Activated CD4-positive, alpha-beta T cell treated with anti-CD3 and anti-CD28 coated beads for 36 hours (primary cell): ENCODE measurements at regions of chr12 and their contacts with region 1.

Region 1: GRCh38 chr12:47882781-47883546 is 21.8 kb downstream of the VDR start:
- DNase-seq: peak; percentile 70
- ATAC-seq: peak; percentile 14
- H3K4me3 Mint-ChIP-seq: peak overlapping the region; percentile 78
- H3K27ac Mint-ChIP-seq: peak overlapping the region; percentile 97
- H3K4me1 Mint-ChIP-seq: peaks cover 81% of the 10 kb centered on the region
- H3K27me3 Mint-ChIP-seq: no peaks in the 10 kb centered on the region

Region 2: GRCh38 chr12:46473634-46474329 is 1409.2 kb before region 1 on chr12:
- CTCF ChIA-PET with region 1: no interaction called
- POLR2A ChIA-PET with region 1: no interaction called
- intact Hi-C with region 1: no loop called
- DNase-seq: no peak
- ATAC-seq: no peak
- H3K4me3 Mint-ChIP-seq: no peak overlapping the region
- H3K27ac Mint-ChIP-seq: peak overlapping the region; percentile 69
- H3K4me1 Mint-ChIP-seq: peaks cover 19% of the 10 kb centered on the region
- H3K27me3 Mint-ChIP-seq: no peaks in the 10 kb centered on the region

Region 3: DNA sequence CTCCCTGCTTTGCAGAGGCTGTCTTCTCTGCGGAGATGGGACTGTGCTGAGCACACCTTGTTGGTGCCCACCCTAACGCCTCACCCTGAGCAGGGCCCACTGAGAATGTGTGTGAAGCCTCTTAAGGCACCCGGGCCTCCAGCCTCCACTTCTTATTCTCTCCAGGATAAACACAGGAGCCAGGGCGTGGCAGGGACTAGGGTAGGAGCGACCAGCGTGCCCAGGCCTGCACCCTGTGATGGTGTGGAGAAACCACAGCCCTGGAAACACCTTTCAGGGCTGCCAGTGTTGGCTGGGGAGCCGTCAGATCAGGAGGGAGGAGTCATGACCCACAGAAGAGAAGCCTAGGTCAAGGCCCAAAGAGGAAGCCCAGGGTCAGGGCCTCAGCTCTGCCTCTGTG is 19.5 kb before region 1 on chr12:
- CTCF ChIA-PET with region 1: interaction called, 24 read pairs
- POLR2A ChIA-PET with region 1: interaction called, 69 read pairs
- intact Hi-C with region 1: loop called (anchors 1 kb)
- DNase-seq: no peak
- ATAC-seq: no peak
- H3K4me3 Mint-ChIP-seq: no peak overlapping the region
- H3K27ac Mint-ChIP-seq: peak overlapping the region; percentile 31
- H3K4me1 Mint-ChIP-seq: peaks cover 73% of the 10 kb centered on the region
- H3K27me3 Mint-ChIP-seq: no peaks in the 10 kb centered on the region

Region 4: GRCh38 chr12:47896633-47897032 is 13.7 kb after region 1 on chr12:
- CTCF ChIA-PET with region 1: interaction called, 17 read pairs
- POLR2A ChIA-PET with region 1: interaction called, 24 read pairs
- intact Hi-C with region 1: no loop called
- DNase-seq: no peak
- ATAC-seq: no peak
- H3K4me3 Mint-ChIP-seq: no peak overlapping the region
- H3K27ac Mint-ChIP-seq: no peak overlapping the region
- H3K4me1 Mint-ChIP-seq: peaks cover 71% of the 10 kb centered on the region
- H3K27me3 Mint-ChIP-seq: no peaks in the 10 kb centered on the region

Region 5: GRCh38 chr12:47949441-47950308 is 66.7 kb after region 1 on chr12:
- CTCF ChIA-PET with region 1: interaction called, 13 read pairs
- POLR2A ChIA-PET with region 1: no interaction called
- intact Hi-C with region 1: no loop called
- DNase-seq: peak; percentile 78
- ATAC-seq: peak; percentile 83
- H3K4me3 Mint-ChIP-seq: no peak overlapping the region
- H3K27ac Mint-ChIP-seq: peak overlapping the region; percentile 10
- H3K4me1 Mint-ChIP-seq: peaks cover 10% of the 10 kb centered on the region
- H3K27me3 Mint-ChIP-seq: peaks cover 3% of the 10 kb centered on the region

Region 6: GRCh38 chr12:48183091-48183875 is 300.3 kb after region 1 on chr12 and contains the start of gene CCDC184:
- CTCF ChIA-PET with region 1: no interaction called
- POLR2A ChIA-PET with region 1: no interaction called
- intact Hi-C with region 1: loop called in 1 of 2 experiments (anchors 10 kb)
- DNase-seq: peak; percentile 78
- ATAC-seq: peak; percentile 80
- H3K4me3 Mint-ChIP-seq: peak within 1 kb of the TSS; percentile 81
- H3K27ac Mint-ChIP-seq: peak within 1 kb of the TSS; percentile 31
- H3K4me1 Mint-ChIP-seq: peaks cover 20% of the 10 kb centered on the region
- H3K27me3 Mint-ChIP-seq: peaks cover 34% of the 10 kb centered on the region
- total RNA-seq, gene CCDC184: 0.25 to 0.37 TPM